SK-N-SH (cell line): ENCODE measurements at regions of chr12 and their contacts with region 1.

Region 1: DNA sequence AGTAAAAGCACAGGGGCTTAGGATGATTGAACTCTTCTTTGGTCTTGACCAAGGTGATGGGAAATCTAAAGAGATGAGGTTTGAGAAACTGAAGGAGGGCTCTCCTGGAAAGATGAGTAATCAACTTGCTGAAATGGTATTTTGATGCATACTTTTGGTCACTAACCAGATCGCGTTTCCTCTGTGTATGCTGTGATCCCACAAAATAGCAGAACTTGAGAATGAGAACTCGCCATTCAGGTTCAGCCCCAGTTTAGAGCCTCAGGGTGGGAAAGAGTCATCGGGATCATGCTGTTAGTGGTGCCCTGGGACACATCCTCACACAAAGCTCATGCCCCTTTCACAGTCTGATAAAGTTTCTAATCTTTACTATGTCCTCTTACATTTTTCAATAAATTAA is 488.8 kb downstream of the ETNK1 start:
- DNase-seq: no peak
- H3K4me3 ChIP-seq: no peak overlapping the region
- H3K27ac ChIP-seq: no peak overlapping the region
- H3K4me1 ChIP-seq: no peaks in the 10 kb centered on the region
- H3K27me3 ChIP-seq: no peaks in the 10 kb centered on the region
- CTCF ChIP-seq: no peak
- EP300 ChIP-seq: no peak
- RAD21 ChIP-seq: no peak

Region 2: DNA sequence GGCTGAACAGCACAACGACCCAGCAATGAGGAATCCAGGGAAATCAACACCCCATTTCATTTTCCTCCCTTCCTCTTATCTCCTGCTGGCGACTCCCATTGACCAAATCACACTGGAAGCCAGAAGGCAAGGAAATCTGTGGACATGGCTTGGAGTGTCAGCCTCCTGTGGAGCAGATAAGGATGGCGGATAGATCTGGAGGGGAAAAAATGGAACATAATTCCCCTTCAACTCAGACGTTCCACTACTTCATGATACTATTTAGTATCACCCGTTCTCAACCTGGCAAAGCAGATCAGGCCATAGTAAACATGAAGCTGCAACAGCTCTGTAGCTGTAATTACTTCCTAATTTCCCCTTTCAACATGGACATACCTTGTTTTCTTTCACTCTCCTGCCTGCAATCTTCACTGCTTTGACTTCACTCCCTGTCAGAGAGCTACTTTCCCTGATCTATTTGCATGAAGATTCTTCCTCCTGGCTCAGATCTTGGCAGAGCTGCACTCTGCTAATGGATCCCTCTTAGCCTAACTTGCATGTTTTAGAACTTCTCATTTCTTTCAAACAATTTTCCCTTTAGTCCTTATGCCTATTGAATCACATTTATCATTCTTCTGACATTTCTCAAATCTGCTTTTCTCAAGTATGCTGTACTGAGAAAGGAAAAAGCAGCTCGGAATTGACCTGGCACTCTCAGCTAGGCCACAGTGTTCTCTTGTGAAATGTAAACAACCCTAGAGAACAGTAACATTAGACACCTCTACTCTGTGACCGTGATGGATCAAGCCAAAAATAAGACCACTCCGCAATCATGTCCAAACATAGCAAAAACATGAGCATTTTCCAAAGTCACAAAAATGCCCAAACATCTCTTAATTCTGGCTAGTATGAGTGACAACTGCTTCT is 353.8 kb before region 1 on chr12:
- CTCF ChIA-PET with region 1: no interaction called
- POLR2A ChIA-PET with region 1: no interaction called
- DNase-seq: no peak
- H3K4me3 ChIP-seq: no peak overlapping the region
- H3K27ac ChIP-seq: no peak overlapping the region
- H3K4me1 ChIP-seq: no peaks in the 10 kb centered on the region; a peak in 1 of 4 replicates
- H3K27me3 ChIP-seq: no peaks in the 10 kb centered on the region; the same call in 1 of the 2 replicates
- CTCF ChIP-seq: no peak
- EP300 ChIP-seq: no peak
- RAD21 ChIP-seq: no peak

Region 3: DNA sequence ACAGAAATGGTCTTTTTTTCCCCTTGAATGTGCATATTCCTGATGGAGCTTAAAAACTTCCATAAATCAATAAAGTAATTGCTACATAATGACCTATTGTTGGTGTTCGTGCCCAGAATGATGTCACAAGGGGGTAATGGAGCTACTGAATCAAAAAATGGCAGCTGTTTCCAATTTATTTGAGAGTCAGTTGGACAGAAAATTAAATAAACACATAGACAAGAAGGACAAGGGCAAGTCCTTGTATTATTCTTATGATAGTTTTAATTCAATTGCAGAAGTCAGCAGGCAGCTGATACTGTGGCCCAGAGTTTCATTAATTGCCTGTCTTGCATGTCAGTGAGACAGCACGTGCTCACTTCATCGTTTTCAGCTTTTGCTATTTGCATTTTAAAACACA is 15.3 kb before region 1 on chr12:
- CTCF ChIA-PET with region 1: interaction called, 10 read pairs
- POLR2A ChIA-PET with region 1: no interaction called
- DNase-seq: peak; percentile 37
- H3K4me3 ChIP-seq: no peak overlapping the region
- H3K27ac ChIP-seq: peak overlapping the region in 1 of 2 experiments; percentile 64; a peak in 2 of 4 replicates
- H3K4me1 ChIP-seq: peaks cover 0 to 12% of the 10 kb centered on the region in 2 experiments; a peak in 2 of 4 replicates
- H3K27me3 ChIP-seq: no peaks in the 10 kb centered on the region
- CTCF ChIP-seq: no peak
- EP300 ChIP-seq: peak in 1 of 2 experiments; percentile 85; a peak in 2 of 4 replicates
- RAD21 ChIP-seq: no peak